PC-3 (cell line): ENCODE measurements at regions of chr17 and their contacts with region 1.

Region 1: GRCh38 chr17:65561394-65562205 is at the start of gene AXIN2:
- DNase-seq: peak; percentile 93
- ATAC-seq: peak; percentile 85
- H3K4me3 ChIP-seq: peak within 1 kb of the TSS; percentile 82
- H3K27ac ChIP-seq: peak within 1 kb of the TSS; percentile 59
- H3K4me1 ChIP-seq: peaks cover 15% of the 10 kb centered on the region
- H3K27me3 ChIP-seq: peaks cover 10% of the 10 kb centered on the region
- CTCF ChIP-seq: no peak; the same call in 1 of the 2 replicates
- total RNA-seq, gene AXIN2: 2.0 and 2.6 TPM in 2 replicates

Region 2: GRCh38 chr17:65627891-65628659 is 66.5 kb after region 1 on chr17:
- CTCF ChIA-PET with region 1: no interaction called
- POLR2A ChIA-PET with region 1: no interaction called
- intact Hi-C with region 1: loop called (anchors 2 kb)
- DNase-seq: peak; percentile 98
- ATAC-seq: peak; percentile 99
- H3K4me3 ChIP-seq: peak overlapping the region; percentile 29; the same call in 1 of the 2 replicates
- H3K27ac ChIP-seq: peak overlapping the region; percentile 63
- H3K4me1 ChIP-seq: peaks cover 25% of the 10 kb centered on the region
- H3K27me3 ChIP-seq: no peaks in the 10 kb centered on the region
- CTCF ChIP-seq: no peak

Region 3: GRCh38 chr17:65698381-65699061 is 136.9 kb after region 1 on chr17:
- CTCF ChIA-PET with region 1: no interaction called
- POLR2A ChIA-PET with region 1: no interaction called
- intact Hi-C with region 1: loop called (anchors 5 kb)
- DNase-seq: no peak
- ATAC-seq: no peak
- H3K4me3 ChIP-seq: no peak overlapping the region
- H3K27ac ChIP-seq: no peak overlapping the region
- H3K4me1 ChIP-seq: peaks cover 30% of the 10 kb centered on the region
- H3K27me3 ChIP-seq: no peaks in the 10 kb centered on the region
- CTCF ChIP-seq: no peak

Region 4: GRCh38 chr17:65750631-65751117 is 189.1 kb after region 1 on chr17:
- CTCF ChIA-PET with region 1: no interaction called
- POLR2A ChIA-PET with region 1: no interaction called
- intact Hi-C with region 1: loop called (anchors 2 kb)
- DNase-seq: peak; percentile 99
- ATAC-seq: peak; percentile 95
- H3K4me3 ChIP-seq: no peak overlapping the region
- H3K27ac ChIP-seq: no peak overlapping the region
- H3K4me1 ChIP-seq: peaks cover 26% of the 10 kb centered on the region
- H3K27me3 ChIP-seq: no peaks in the 10 kb centered on the region
- CTCF ChIP-seq: no peak

Region 5: GRCh38 chr17:65794572-65794971 is 233.0 kb after region 1 on chr17:
- CTCF ChIA-PET with region 1: no interaction called
- POLR2A ChIA-PET with region 1: no interaction called
- intact Hi-C with region 1: loop called (anchors 2 kb)
- DNase-seq: peak; percentile 82
- ATAC-seq: peak; percentile 81
- H3K4me3 ChIP-seq: no peak overlapping the region
- H3K27ac ChIP-seq: no peak overlapping the region
- H3K4me1 ChIP-seq: no peaks in the 10 kb centered on the region
- H3K27me3 ChIP-seq: no peaks in the 10 kb centered on the region
- CTCF ChIP-seq: peak; percentile 88